H1 (cell line): ENCODE measurements at regions of chr15 and their contacts with region 1.

Region 1: GRCh38 chr15:58070801-58071418 is 5.4 kb upstream of the ALDH1A2 start:
- DNase-seq: peak in 1 of 2 experiments; percentile 75
- H3K4me3 ChIP-seq: no peak overlapping the region
- H3K27ac ChIP-seq: no peak overlapping the region
- H3K4me1 ChIP-seq: no peaks in the 10 kb centered on the region
- H3K27me3 ChIP-seq: peaks cover 0 to 20% (median 10%) of the 10 kb centered on the region in 4 experiments; a peak in 6 of 7 replicates
- CTCF ChIP-seq: peak; percentile 69 to 87 (median 78)
- EP300 ChIP-seq: no peak
- POLR2A ChIP-seq: no peak
- RAD21 ChIP-seq: peak; percentile 90 to 92

Region 2: DNA sequence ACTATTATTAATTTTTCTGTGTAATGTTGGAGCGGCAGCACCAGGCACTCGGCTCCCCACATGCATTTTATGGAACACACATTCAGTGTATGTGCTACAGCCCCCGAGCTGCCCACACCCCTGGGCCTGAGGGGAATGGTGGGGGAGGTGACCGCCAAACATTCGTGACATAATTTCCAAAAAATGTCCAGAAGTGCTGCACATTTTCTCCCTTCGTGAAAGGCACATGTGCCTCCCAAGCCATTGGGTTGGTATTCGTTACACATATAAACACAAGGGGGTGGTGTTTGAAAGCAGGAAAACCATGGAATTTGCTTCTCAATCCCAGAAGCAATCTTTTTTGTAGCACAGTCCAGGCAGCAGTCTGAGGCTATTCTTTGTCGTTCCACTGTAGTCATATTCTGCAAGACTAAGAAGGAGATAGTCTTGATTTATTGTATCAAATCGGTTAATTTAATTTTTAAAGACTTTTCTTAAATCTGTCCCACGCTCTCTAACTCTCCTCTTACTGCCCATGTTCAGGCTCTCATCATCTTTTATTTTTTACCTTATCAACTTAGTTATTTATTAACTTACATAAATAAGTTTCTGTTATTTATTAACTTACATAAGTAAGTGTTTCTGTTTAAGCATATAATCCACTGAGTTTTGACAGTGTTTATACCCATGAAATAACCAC is 403.6 kb before region 1 on chr15:
- CTCF ChIA-PET with region 1: interaction called, 10 read pairs
- POLR2A ChIA-PET with region 1: no interaction called
- DNase-seq: no peak
- H3K4me3 ChIP-seq: no peak overlapping the region
- H3K27ac ChIP-seq: no peak overlapping the region
- H3K4me1 ChIP-seq: no peaks in the 10 kb centered on the region
- H3K27me3 ChIP-seq: no peaks in the 10 kb centered on the region
- CTCF ChIP-seq: peak in 2 of 3 experiments; percentile 15 to 44; a peak in 2 of 4 replicates
- EP300 ChIP-seq: no peak
- POLR2A ChIP-seq: no peak
- RAD21 ChIP-seq: peak; percentile 45 to 57

Region 3: GRCh38 chr15:57866149-57866736 is 204.7 kb before region 1 on chr15:
- CTCF ChIA-PET with region 1: interaction called, 144 read pairs
- POLR2A ChIA-PET with region 1: interaction called, 3 read pairs
- DNase-seq: peak; percentile 38 to 87
- H3K4me3 ChIP-seq: no peak overlapping the region
- H3K27ac ChIP-seq: no peak overlapping the region
- H3K4me1 ChIP-seq: no peaks in the 10 kb centered on the region
- H3K27me3 ChIP-seq: no peaks in the 10 kb centered on the region
- CTCF ChIP-seq: peak; percentile 61 to 90 (median 78)
- EP300 ChIP-seq: no peak
- POLR2A ChIP-seq: no peak
- RAD21 ChIP-seq: peak; percentile 64 to 78

Region 4: DNA sequence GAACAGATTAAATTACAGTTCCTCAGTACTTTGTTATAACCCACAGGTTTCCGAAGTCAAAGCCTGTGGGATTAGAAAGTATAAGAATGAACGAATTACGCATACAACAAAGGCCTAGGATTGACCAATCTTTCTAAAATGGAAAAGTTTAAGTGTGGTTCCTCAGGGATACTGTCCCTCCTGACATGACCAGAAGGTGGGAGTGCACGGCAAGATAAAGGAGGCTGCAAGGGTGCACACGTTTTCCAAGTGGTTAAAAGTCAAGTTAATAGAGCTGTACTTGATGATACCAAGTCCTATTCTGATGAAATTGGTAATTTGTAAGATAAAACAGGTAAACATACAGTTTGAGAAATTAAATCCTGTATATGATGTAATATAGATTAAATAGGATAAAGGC is 101.6 kb before region 1 on chr15:
- CTCF ChIA-PET with region 1: interaction called, 20 read pairs
- POLR2A ChIA-PET with region 1: no interaction called
- DNase-seq: no peak
- H3K4me3 ChIP-seq: no peak overlapping the region
- H3K27ac ChIP-seq: no peak overlapping the region
- H3K4me1 ChIP-seq: no peaks in the 10 kb centered on the region
- H3K27me3 ChIP-seq: no peaks in the 10 kb centered on the region; a peak in 1 of 7 replicates
- CTCF ChIP-seq: peak; percentile 28 to 50 (median 44); a peak in 3 of 4 replicates
- EP300 ChIP-seq: no peak
- POLR2A ChIP-seq: no peak
- RAD21 ChIP-seq: peak; percentile 67 to 69

Region 5: GRCh38 chr15:58086491-58086890 is 15.6 kb after region 1 on chr15:
- CTCF ChIA-PET with region 1: interaction called, 10 read pairs
- POLR2A ChIA-PET with region 1: no interaction called
- DNase-seq: no peak
- H3K4me3 ChIP-seq: no peak overlapping the region
- H3K27ac ChIP-seq: no peak overlapping the region
- H3K4me1 ChIP-seq: no peaks in the 10 kb centered on the region
- H3K27me3 ChIP-seq: no peaks in the 10 kb centered on the region
- CTCF ChIP-seq: no peak
- EP300 ChIP-seq: no peak
- POLR2A ChIP-seq: no peak
- RAD21 ChIP-seq: no peak

Region 6: DNA sequence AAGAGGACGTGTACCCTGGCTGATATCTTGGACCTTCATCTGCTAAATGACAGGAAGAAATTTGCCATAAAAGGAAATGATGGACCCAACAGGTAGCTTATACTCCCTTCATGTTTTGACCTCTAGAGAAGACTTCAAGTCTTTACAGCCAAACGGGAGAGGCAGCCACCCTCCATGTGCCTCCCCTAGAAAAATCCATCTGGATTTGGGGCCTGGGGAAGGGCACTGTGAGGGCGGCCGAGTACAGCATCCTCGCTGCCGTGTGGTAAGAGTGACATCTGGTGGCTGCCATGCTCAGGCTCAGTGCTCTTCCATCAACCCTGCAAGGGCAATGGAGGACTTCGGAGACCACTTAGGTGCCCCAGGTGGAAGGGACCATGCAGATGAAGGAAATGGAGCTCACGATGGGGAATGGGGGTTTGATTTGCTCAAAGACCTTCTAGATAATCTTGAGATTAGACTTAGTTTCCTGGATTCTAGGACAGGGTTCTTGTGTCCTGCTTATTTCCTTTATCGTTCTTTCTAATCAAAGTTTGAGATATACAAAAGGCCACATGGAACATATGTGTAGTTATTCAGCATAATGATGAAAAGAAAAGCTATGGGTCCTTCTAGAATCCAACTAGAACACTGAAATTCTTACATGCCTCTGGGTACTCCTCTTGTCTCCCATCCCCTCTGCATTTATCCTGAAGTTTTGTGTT is 111.7 kb after region 1 on chr15:
- CTCF ChIA-PET with region 1: interaction called, 41 read pairs
- POLR2A ChIA-PET with region 1: no interaction called
- DNase-seq: peak; percentile 36 to 73
- H3K4me3 ChIP-seq: no peak overlapping the region
- H3K27ac ChIP-seq: no peak overlapping the region
- H3K4me1 ChIP-seq: no peaks in the 10 kb centered on the region
- H3K27me3 ChIP-seq: peaks cover 0 to 2% (median 0%) of the 10 kb centered on the region in 4 experiments; a peak in 1 of 7 replicates
- CTCF ChIP-seq: peak; percentile 95 to 97 (median 96)
- EP300 ChIP-seq: no peak
- POLR2A ChIP-seq: no peak
- RAD21 ChIP-seq: peak; percentile 99 to 100

Region 7: GRCh38 chr15:58387130-58387529 is 316.2 kb after region 1 on chr15:
- CTCF ChIA-PET with region 1: no interaction called
- POLR2A ChIA-PET with region 1: no interaction called
- DNase-seq: no peak
- H3K4me3 ChIP-seq: no peak overlapping the region
- H3K27ac ChIP-seq: no peak overlapping the region
- H3K4me1 ChIP-seq: peaks cover 0 to 5% (median 2%) of the 10 kb centered on the region in 4 experiments; a peak in 4 of 7 replicates
- H3K27me3 ChIP-seq: no peaks in the 10 kb centered on the region
- CTCF ChIP-seq: no peak
- EP300 ChIP-seq: no peak
- POLR2A ChIP-seq: no peak
- RAD21 ChIP-seq: no peak